ENCODE measurements at regions of chr13 and their contacts with region 1.

Region 1: DNA sequence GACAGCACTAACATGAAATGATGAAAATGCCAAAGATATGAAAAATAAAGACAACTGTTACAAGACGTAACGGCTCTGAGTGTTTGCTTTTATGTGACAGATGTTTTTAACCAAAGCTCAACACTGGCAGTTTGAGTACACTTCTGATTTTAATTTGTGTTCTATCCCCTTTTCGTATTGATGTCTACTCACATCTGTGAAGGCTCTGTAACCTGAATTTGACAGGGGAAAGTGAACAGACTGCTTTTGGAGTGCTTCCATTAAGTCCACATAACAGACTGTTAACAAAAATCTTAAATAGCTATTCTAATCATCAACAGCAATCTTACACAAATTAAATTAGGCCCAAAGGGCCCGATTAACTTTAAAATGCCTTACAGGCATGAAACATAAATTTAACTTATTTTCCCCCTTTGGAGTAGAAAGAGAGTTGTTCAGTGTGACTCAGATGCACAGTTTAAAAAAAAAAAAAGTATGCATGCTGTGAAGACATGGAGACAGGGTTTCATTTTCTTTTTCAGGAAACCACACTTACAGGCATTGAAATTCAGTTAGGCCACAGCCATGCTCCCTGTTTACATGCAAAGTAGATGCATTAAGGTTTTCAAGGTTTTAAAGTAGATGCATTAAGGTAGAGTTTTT is 16.3 kb upstream of the RNASEH2B start:
- DNase-seq: no peak
- ATAC-seq: peak; percentile 95
- H3K4me3 Mint-ChIP-seq: peak overlapping the region; percentile 75
- H3K27ac Mint-ChIP-seq: peak overlapping the region; percentile 93
- H3K4me1 Mint-ChIP-seq: peaks cover 37% of the 10 kb centered on the region
- H3K27me3 Mint-ChIP-seq: no peaks in the 10 kb centered on the region

Region 2: GRCh38 chr13:50081679-50082425 is 811.5 kb before region 1 on chr13:
- POLR2A ChIA-PET with region 1: interaction called, 10 read pairs
- DNase-seq: peak; percentile 95
- ATAC-seq: peak; percentile 80
- H3K4me3 Mint-ChIP-seq: peak overlapping the region; percentile 100
- H3K27ac Mint-ChIP-seq: peak overlapping the region; percentile 100
- H3K4me1 Mint-ChIP-seq: peaks cover 31% of the 10 kb centered on the region
- H3K27me3 Mint-ChIP-seq: no peaks in the 10 kb centered on the region

Region 3: DNA sequence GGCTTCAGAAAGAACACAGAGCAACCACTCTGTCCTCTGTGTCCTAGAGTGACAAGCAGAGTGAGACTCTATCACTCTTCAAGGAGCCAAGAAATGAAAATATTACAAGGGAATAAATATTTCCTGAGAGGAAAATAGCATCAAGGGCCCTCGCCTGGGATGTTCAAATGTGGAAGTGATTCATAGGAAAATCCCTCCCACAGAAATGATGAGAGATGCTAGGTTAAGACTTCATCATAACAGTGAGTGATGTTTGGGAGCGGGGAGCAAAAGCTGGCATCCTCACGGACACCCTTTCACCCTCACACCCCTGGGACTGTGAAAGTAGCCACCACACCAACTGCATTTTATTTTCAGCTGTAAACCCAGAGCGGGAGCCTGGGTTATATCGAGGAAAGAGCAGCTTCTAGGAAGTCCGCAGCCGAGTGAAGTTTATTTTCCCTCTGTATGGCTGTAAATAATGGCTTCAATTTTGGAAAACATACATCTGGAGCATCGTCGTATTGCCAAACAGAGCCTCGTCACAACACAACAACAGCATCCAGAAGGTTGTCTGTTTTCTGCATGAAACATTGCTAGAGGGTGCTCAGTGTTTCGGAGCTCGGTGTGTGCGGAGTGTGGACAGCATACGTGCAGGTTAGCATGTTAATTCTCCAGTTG is 104.7 kb before region 1 on chr13:
- POLR2A ChIA-PET with region 1: no interaction called
- DNase-seq: no peak
- ATAC-seq: no peak
- H3K4me3 Mint-ChIP-seq: no peak overlapping the region
- H3K27ac Mint-ChIP-seq: no peak overlapping the region
- H3K4me1 Mint-ChIP-seq: no peaks in the 10 kb centered on the region
- H3K27me3 Mint-ChIP-seq: peaks cover 10% of the 10 kb centered on the region

Region 4: DNA sequence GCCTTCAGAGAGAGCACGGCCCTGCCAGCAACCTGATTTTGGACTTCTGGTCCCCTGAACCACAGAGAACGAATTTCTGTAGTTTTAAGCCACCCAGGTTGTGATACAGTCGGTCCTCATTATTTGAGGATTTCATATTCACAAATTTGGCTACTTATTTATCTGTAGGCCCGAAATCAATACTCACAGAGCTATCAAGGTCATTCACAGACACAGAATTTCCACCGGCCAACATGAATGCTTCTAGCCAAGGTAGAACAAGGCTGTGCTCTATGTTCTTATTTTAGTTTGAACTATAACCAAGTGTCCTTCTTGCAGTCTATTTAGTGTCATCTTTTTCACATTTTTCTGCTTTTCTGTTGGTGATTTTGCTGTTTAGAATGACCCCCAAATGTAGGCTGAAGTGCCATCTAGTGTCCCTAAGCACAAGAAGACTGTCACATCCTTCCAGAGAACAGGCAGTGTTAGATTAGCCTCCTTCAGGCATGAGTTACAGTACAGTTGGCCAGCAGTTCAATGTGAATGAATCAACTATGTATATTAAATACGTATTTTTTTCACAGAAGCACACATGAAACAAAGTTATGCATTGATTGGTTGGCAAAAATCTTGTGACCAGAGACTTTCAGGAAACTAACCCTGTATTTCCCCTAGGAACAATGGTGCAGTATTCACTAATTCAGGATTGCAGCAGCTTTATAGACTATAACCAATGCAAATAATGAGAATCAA is 154.3 kb after region 1 on chr13:
- POLR2A ChIA-PET with region 1: no interaction called
- DNase-seq: no peak
- ATAC-seq: no peak
- H3K4me3 Mint-ChIP-seq: no peak overlapping the region
- H3K27ac Mint-ChIP-seq: no peak overlapping the region
- H3K4me1 Mint-ChIP-seq: no peaks in the 10 kb centered on the region
- H3K27me3 Mint-ChIP-seq: no peaks in the 10 kb centered on the region

Measured in activated naive CD8-positive, alpha-beta T cell treated with anti-CD3 and anti-CD28 coated beads, Interleukin-2, amount 10 ng/mL, durations not matched to agents 7 days and 5 days (primary cell).